Endothelial cell of umbilical vein (primary cell): ENCODE measurements at regions of chrX and their contacts with region 1.

Region 1: DNA sequence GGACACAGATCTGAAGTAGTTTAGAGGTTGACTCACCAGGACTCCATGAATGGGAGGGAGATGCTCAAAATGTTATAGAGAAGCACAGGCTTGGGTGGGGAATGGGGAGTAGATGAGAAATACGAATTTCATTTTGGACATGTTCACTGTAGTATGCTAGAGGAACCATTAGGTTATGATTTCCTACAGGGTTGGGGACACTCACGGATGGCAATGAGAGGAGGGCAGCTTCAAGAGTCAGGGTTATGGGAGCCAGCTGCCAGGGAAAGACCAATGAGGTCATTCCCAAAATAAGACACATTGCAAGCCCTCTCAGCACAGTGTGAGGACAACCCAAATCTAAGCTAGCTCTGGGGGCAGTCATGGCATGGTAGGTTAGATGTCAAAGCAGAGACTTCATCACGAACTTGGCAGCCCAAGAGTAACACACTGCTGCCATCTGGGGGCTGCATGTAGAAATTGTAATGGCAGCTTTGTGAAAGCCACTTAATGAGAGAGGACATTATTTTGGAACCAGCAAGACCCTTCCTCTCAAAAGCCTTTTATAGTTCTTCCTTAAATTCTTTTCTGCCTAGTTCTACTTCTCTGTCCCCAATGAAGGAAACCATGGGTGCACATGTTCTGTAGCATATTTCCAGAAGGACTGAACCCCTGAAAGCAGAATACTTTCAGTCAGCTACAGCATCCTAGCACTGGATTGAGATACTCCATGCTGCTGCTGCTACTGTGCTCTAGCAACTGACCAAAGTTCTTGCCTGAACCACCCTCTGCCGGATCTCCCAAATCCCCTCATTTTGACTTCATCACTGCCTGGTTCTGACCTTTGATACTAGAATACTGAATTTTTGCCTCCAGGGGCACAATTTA is 16.2 kb upstream of the ZCCHC12 start:
- DNase-seq: peak; percentile 50
- H3K4me3 ChIP-seq: no peak overlapping the region
- H3K27ac ChIP-seq: no peak overlapping the region
- H3K4me1 ChIP-seq: peaks cover 10% of the 10 kb centered on the region
- H3K27me3 ChIP-seq: no peaks in the 10 kb centered on the region
- CTCF ChIP-seq: peak; percentile 49 to 59
- POLR2A ChIP-seq: no peak

Region 2: DNA sequence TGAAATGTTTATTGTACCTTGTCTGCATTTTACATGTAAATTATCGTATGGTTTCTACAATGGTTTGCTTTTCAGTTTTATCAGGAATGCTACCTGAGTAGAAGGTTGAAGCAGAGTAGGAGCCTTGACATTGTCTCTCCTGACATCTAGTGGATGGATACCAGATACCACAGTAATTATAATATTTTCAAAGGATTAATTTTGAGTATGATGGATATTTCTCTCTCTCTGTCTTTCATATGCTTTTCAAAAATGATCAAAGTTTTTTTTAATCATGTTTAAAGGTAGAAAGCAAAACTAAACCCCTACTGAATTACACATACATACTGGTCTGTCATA is 581.3 kb before region 1 on chrX:
- CTCF ChIA-PET with region 1: no interaction called
- POLR2A ChIA-PET with region 1: no interaction called
- dilution Hi-C with region 1: no loop called
- intact Hi-C with region 1: no loop called
- DNase-seq: peak; percentile 65
- H3K4me3 ChIP-seq: no peak overlapping the region
- H3K27ac ChIP-seq: peak overlapping the region; percentile 86
- H3K4me1 ChIP-seq: peaks cover 31% of the 10 kb centered on the region
- H3K27me3 ChIP-seq: no peaks in the 10 kb centered on the region
- CTCF ChIP-seq: peak; percentile 11 to 24
- POLR2A ChIP-seq: no peak

Region 3: DNA sequence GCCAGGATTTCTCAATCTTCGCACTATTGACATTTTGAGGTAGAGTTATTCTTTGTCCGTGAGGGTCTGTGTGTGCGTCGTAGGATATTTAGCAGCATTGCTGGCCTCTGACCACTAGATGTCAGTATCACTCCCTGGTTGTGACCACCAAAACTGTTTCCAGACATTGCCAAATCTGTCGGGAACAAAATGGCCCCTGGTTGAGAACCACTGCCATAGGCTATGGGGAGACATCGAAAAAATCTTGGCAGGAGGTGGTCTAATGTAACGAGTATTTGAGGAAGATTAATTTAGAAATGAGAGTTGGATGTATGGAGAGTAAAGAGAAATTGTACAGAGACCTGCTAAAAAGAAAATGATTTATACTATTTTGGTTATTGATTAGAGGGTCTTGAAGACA is 203.4 kb before region 1 on chrX:
- CTCF ChIA-PET with region 1: interaction called, 18 read pairs
- POLR2A ChIA-PET with region 1: no interaction called
- dilution Hi-C with region 1: no loop called
- intact Hi-C with region 1: loop called (anchors 1 kb)
- DNase-seq: peak; percentile 50
- H3K4me3 ChIP-seq: no peak overlapping the region
- H3K27ac ChIP-seq: no peak overlapping the region
- H3K4me1 ChIP-seq: no peaks in the 10 kb centered on the region
- H3K27me3 ChIP-seq: no peaks in the 10 kb centered on the region
- CTCF ChIP-seq: peak; percentile 54 to 69
- POLR2A ChIP-seq: no peak

Region 4: DNA sequence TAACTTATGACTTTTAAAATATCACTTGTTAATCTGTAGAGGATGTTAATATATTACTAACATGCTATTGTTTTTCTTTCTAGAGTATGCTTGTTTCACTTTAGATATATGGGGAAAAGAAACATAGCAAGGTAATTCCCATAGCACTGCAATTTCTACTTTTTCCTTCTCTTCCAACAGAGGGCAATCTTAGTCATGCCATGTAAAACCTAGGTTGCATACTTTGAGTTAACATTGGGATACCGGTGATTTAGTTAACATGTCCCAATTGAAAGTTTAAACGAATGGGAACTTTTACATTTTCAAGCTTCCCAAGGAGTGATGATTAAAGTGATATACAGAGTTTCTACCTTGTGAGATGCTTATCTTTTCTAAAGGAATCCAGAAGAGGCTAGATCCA is 169.4 kb before region 1 on chrX:
- CTCF ChIA-PET with region 1: interaction called, 80 read pairs
- POLR2A ChIA-PET with region 1: no interaction called
- dilution Hi-C with region 1: no loop called
- intact Hi-C with region 1: loop called (anchors 1 kb)
- DNase-seq: peak; percentile 9
- H3K4me3 ChIP-seq: no peak overlapping the region
- H3K27ac ChIP-seq: no peak overlapping the region
- H3K4me1 ChIP-seq: no peaks in the 10 kb centered on the region
- H3K27me3 ChIP-seq: no peaks in the 10 kb centered on the region
- CTCF ChIP-seq: peak in 1 of 2 donors; percentile 16
- POLR2A ChIP-seq: no peak

Region 5: DNA sequence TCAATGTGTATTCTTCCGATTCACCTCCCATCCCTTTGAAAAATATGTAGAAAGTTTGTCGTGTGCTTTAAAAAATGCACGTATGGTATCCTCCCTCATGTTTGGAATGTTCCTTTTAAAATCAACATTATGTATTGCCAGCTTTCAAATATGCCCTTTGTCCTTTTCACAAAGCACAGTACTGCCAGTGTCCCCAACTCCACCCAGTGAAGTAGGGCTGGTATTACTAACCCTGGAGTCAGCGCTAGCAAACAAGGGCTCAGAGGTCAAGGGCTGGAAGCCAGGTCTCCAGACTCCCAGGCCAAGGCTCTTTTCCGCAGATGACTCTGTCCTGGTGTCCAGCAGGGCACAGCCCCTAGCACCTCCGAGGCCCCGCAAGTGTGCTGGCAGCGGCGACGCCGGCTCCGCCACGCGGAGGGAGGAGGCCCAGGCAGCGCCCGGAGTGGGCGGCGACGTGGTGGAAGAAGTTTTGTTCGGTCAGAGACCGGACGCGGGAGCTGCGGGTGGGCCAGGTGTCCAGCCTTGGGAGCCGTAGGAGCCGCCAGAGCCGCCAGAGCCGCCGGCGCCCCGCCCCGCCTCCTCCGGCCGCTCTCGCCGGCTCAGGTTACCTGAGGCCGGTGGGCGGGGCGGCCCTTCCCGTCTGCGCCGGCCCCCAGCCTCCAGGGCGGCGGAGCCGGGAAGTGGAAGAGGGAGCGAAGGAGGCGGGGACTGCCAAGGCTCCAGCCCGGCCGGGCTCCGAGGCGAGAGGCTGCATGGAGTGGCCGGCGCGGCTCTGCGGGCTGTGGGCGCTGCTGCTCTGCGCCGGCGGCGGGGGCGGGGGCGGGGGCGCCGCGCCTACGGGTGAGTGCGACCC is 80.3 kb before region 1 on chrX and contains the start of gene IL13RA1:
- CTCF ChIA-PET with region 1: interaction called, 10 read pairs
- POLR2A ChIA-PET with region 1: interaction called, 3 read pairs
- dilution Hi-C with region 1: no loop called
- intact Hi-C with region 1: loop called (anchors 2 kb)
- DNase-seq: peak; percentile 86
- H3K4me3 ChIP-seq: peak within 1 kb of the TSS; percentile 60 to 75 (median 71)
- H3K27ac ChIP-seq: peak within 1 kb of the TSS; percentile 80
- H3K4me1 ChIP-seq: peaks cover 37% of the 10 kb centered on the region
- H3K27me3 ChIP-seq: no peaks in the 10 kb centered on the region
- CTCF ChIP-seq: no peak
- POLR2A ChIP-seq: peak; percentile 50
- total RNA-seq, gene IL13RA1: 61.9 and 66.4 TPM in 2 replicates